ENCODE measurements at regions of chr11 and their contacts with region 1.

Region 1: DNA sequence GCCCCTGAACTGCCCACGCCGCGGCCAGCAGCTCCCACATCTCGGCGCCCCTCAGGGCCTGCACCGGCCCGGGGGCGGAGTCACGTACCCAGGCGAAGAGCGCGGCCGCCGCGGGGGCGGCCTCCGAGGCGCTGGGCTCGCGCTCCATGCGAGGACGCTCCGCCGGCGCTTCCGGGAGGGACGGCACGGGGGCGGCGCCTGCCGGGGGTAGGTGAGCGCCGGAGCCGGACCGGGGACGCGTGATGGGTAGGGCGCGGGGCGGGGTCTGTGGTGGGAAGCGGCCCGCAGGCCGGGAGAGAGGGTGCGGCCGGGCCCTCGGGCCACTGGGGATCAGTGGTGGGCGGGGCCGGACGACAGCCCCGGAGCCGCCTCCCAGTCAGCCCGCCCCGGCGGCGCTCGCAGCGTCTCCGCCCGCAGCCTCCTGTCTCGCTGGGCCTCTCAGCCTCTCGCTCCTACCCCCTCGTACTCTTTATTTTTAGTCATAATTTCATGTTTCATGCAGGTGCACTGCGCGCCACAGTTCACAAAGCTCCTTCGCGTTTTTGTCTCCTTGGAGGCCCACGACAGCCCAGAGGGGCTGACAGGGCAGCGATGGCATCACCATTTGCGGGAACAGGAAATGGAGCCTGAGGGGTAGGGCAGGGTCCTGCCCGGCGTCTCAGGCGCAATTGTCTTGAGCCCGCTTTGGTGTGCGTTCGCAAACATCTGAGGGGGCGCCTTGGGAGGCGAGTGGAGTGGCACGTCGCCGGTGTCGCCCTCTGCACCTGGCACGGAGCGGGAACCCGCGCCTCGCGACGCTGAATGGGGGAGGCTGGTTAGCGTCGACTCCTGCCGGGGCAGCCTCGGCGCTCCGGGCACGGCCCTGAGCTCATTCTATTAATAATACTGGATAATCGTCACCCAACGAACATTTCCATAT is at the start of gene SERGEF:
- DNase-seq: peak; percentile 81 to 96 (median 87)
- ATAC-seq: peak; percentile 93
- H3K4me3 ChIP-seq: peak within 1 kb of the TSS; percentile 85
- H3K4me3 Mint-ChIP-seq: peak within 1 kb of the TSS; percentile 93 to 100 (median 98)
- H3K27ac ChIP-seq: peak within 1 kb of the TSS; percentile 84
- H3K27ac Mint-ChIP-seq: peak within 1 kb of the TSS; percentile 89 to 99 (median 99)
- H3K4me1 ChIP-seq: peaks cover 10% of the 10 kb centered on the region in 2 donors
- H3K4me1 Mint-ChIP-seq: peaks cover 17 to 47% (median 37%) of the 10 kb centered on the region in 7 donors
- H3K27me3 ChIP-seq: no peaks in the 10 kb centered on the region
- H3K27me3 Mint-ChIP-seq: no peaks in the 10 kb centered on the region
- total RNA-seq, gene SERGEF: 35.0 to 57.7 (median 52.9) TPM

Region 2: DNA sequence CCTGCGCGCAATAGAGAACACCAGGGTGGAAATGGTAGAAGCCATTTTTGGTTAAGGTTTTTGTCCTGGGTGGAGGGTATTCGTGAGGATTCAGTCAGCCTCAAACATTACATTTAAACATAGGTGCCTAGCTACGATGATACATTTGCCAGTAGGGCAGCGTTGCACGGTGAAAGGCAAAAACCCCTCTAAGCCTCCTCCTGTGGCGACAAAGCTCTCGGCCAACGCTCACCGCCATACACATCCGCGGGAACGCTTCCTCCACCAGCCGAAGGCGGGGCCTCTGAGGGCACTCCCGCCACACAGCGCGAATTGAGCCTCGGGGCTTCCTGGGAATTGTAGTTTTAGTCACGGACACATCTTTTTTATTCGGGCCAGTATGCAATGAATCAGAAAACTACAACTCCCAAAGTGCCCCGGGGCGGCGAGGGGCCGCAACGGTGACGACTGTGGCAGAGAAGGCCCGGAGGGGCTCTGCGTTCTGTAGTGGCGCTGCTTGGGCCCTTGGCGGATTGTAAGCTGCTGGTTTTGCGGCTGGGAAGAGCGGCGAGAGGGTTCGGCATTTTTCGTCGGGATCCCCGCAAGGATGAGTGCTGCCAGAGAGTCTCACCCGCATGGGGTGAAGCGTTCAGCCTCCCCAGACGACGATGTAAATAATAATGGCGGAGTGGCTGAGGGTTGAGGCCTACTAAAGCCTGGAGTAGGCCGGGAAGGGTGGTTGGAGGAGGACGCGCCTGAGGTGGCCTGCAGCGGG is 1274.8 kb before region 1 on chr11 and contains the start of gene C11orf58:
- CTCF ChIA-PET with region 1: no interaction called
- POLR2A ChIA-PET with region 1: interaction called, 3 read pairs
- intact Hi-C with region 1: loop called (anchors 1 to 5 kb)
- DNase-seq: peak; percentile 87 to 98 (median 97)
- ATAC-seq: peak; percentile 97
- H3K4me3 ChIP-seq: peak within 1 kb of the TSS; percentile 92
- H3K4me3 Mint-ChIP-seq: peak within 1 kb of the TSS in 5 of 10 donors; percentile 72 to 87 (median 77)
- H3K27ac ChIP-seq: peak within 1 kb of the TSS; percentile 98
- H3K27ac Mint-ChIP-seq: peak within 1 kb of the TSS in 2 of 9 donors; percentile 83 to 97
- H3K4me1 ChIP-seq: peaks cover 28 to 33% of the 10 kb centered on the region in 2 donors
- H3K4me1 Mint-ChIP-seq: peaks cover 6 to 32% (median 21%) of the 10 kb centered on the region in 7 donors
- H3K27me3 ChIP-seq: no peaks in the 10 kb centered on the region
- H3K27me3 Mint-ChIP-seq: peaks cover 0 to 3% (median 0%) of the 10 kb centered on the region in 5 donors
- total RNA-seq, gene C11orf58: 116 to 168 (median 155) TPM

Region 3: GRCh38 chr11:17276236-17277023 is 736.7 kb before region 1 on chr11 and contains the start of gene NUCB2:
- CTCF ChIA-PET with region 1: interaction called, 3 read pairs
- POLR2A ChIA-PET with region 1: interaction called, 4 read pairs
- intact Hi-C with region 1: loop called in 1 of 2 experiments (anchors 5 kb)
- DNase-seq: peak; percentile 92 to 98 (median 95)
- ATAC-seq: peak; percentile 96
- H3K4me3 ChIP-seq: peak within 1 kb of the TSS; percentile 78
- H3K4me3 Mint-ChIP-seq: peak within 1 kb of the TSS; percentile 83 to 99 (median 93)
- H3K27ac ChIP-seq: peak within 1 kb of the TSS; percentile 90
- H3K27ac Mint-ChIP-seq: peak within 1 kb of the TSS; percentile 88 to 93 (median 91)
- H3K4me1 ChIP-seq: peaks cover 17 to 28% of the 10 kb centered on the region in 2 donors
- H3K4me1 Mint-ChIP-seq: peaks cover 19 to 48% (median 38%) of the 10 kb centered on the region in 7 donors
- H3K27me3 ChIP-seq: no peaks in the 10 kb centered on the region
- H3K27me3 Mint-ChIP-seq: no peaks in the 10 kb centered on the region
- total RNA-seq, gene NUCB2: 72.0 to 171 (median 145) TPM

Region 4: DNA sequence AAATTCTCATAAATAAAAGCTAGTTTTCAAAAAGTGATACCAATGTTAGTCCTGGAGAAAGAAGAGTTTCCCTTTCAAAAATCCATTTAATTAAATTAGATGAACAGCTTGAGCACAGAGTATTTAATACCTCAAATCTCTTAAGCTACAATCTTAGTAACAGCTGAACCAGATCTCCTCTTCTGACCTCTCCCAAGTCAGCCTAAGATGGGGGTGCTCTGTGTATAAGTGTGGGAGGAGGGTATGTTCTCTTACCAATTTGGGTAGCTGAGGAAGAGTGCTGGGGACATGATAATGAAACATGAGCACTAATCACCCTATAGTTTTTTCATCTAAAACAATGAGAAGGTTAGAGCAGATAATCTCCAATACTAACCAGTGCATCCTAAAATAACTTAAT is 23.3 kb after region 1 on chr11:
- CTCF ChIA-PET with region 1: no interaction called
- POLR2A ChIA-PET with region 1: no interaction called
- intact Hi-C with region 1: no loop called
- DNase-seq: no peak
- ATAC-seq: no peak
- H3K4me3 ChIP-seq: no peak overlapping the region
- H3K4me3 Mint-ChIP-seq: no peak overlapping the region
- H3K27ac ChIP-seq: no peak overlapping the region
- H3K27ac Mint-ChIP-seq: no peak overlapping the region
- H3K4me1 ChIP-seq: no peaks in the 10 kb centered on the region
- H3K4me1 Mint-ChIP-seq: no peaks in the 10 kb centered on the region
- H3K27me3 ChIP-seq: no peaks in the 10 kb centered on the region
- H3K27me3 Mint-ChIP-seq: peaks cover 0 to 11% (median 0%) of the 10 kb centered on the region in 5 donors

Region 5: GRCh38 chr11:18105802-18106574 is 92.9 kb after region 1 on chr11 and contains the start of gene SAAL1:
- CTCF ChIA-PET with region 1: interaction called, 14 read pairs
- POLR2A ChIA-PET with region 1: interaction called, 11 read pairs
- intact Hi-C with region 1: loop called (anchors 1 kb)
- DNase-seq: peak; percentile 80 to 95 (median 84)
- ATAC-seq: peak; percentile 99
- H3K4me3 ChIP-seq: peak within 1 kb of the TSS; percentile 93
- H3K4me3 Mint-ChIP-seq: peak within 1 kb of the TSS; percentile 84 to 95 (median 93)
- H3K27ac ChIP-seq: peak within 1 kb of the TSS; percentile 78
- H3K27ac Mint-ChIP-seq: peak within 1 kb of the TSS; percentile 77 to 93 (median 90)
- H3K4me1 ChIP-seq: peaks cover 14 to 15% of the 10 kb centered on the region in 2 donors
- H3K4me1 Mint-ChIP-seq: peaks cover 21 to 54% (median 42%) of the 10 kb centered on the region in 7 donors
- H3K27me3 ChIP-seq: no peaks in the 10 kb centered on the region
- H3K27me3 Mint-ChIP-seq: peaks cover 0 to 15% (median 0%) of the 10 kb centered on the region in 5 donors
- total RNA-seq, gene SAAL1: 16.0 to 25.3 (median 19.3) TPM

Region 6: GRCh38 chr11:18721561-18722292 is 708.6 kb after region 1 on chr11:
- CTCF ChIA-PET with region 1: no interaction called
- POLR2A ChIA-PET with region 1: no interaction called
- intact Hi-C with region 1: loop called in 1 of 2 experiments (anchors 5 kb)
- DNase-seq: peak; percentile 15 to 51 (median 37)
- ATAC-seq: peak; percentile 61
- H3K4me3 ChIP-seq: peak overlapping the region; percentile 72
- H3K4me3 Mint-ChIP-seq: peak overlapping the region; percentile 82 to 97 (median 92)
- H3K27ac ChIP-seq: peak overlapping the region; percentile 46
- H3K27ac Mint-ChIP-seq: peak overlapping the region in 6 of 9 donors; percentile 39 to 89 (median 76)
- H3K4me1 ChIP-seq: peaks cover 0 to 5% of the 10 kb centered on the region in 2 donors
- H3K4me1 Mint-ChIP-seq: peaks cover 8 to 15% (median 9%) of the 10 kb centered on the region in 7 donors
- H3K27me3 ChIP-seq: no peaks in the 10 kb centered on the region
- H3K27me3 Mint-ChIP-seq: peaks cover 0 to 34% (median 0%) of the 10 kb centered on the region in 5 donors

Region 7: GRCh38 chr11:19240420-19241259 is 1227.5 kb after region 1 on chr11 and contains the start of gene E2F8:
- CTCF ChIA-PET with region 1: no interaction called
- POLR2A ChIA-PET with region 1: interaction called, 3 read pairs
- intact Hi-C with region 1: loop called in 1 of 2 experiments (anchors 1 kb)
- DNase-seq: peak; percentile 42 to 95 (median 62)
- ATAC-seq: peak; percentile 86
- H3K4me3 ChIP-seq: peak within 1 kb of the TSS; percentile 75
- H3K4me3 Mint-ChIP-seq: peak within 1 kb of the TSS; percentile 73 to 97 (median 85)
- H3K27ac ChIP-seq: no peak within 1 kb of the TSS
- H3K27ac Mint-ChIP-seq: peak within 1 kb of the TSS in 2 of 9 donors; percentile 41 to 85
- H3K4me1 ChIP-seq: peaks cover 12 to 13% of the 10 kb centered on the region in 2 donors
- H3K4me1 Mint-ChIP-seq: peaks cover 8 to 49% (median 22%) of the 10 kb centered on the region in 7 donors
- H3K27me3 ChIP-seq: peaks cover 8 to 25% of the 10 kb centered on the region in 2 donors
- H3K27me3 Mint-ChIP-seq: peaks cover 6 to 43% (median 35%) of the 10 kb centered on the region in 5 donors
- total RNA-seq, gene E2F8: 0.17 to 25.4 TPM in 2 of 5 experiments, not detected in the others

Measured in naive thymus-derived CD4-positive, alpha-beta T cell (primary cell).